H1 (cell line): ENCODE measurements at regions of chr7 and their contacts with region 1.

Region 1: GRCh38 chr7:121395961-121396757 is at the start of gene FAM3C:
- DNase-seq: peak; percentile 53 to 92
- H3K4me3 ChIP-seq: peak within 1 kb of the TSS; percentile 53 to 81 (median 76)
- H3K27ac ChIP-seq: peak within 1 kb of the TSS; percentile 84
- H3K4me1 ChIP-seq: no peaks in the 10 kb centered on the region
- H3K27me3 ChIP-seq: no peaks in the 10 kb centered on the region
- CTCF ChIP-seq: peak; percentile 77 to 78 (median 77)
- EP300 ChIP-seq: 0 out of 3 replicates have a peak, but pooled peaks of 1 of the 2 experiments have one; percentile 38
- POLR2A ChIP-seq: peak; percentile 75 to 88
- RAD21 ChIP-seq: peak; percentile 35 to 55
- total RNA-seq, gene FAM3C: 71.5 and 77.7 TPM in 2 replicates

Region 2: DNA sequence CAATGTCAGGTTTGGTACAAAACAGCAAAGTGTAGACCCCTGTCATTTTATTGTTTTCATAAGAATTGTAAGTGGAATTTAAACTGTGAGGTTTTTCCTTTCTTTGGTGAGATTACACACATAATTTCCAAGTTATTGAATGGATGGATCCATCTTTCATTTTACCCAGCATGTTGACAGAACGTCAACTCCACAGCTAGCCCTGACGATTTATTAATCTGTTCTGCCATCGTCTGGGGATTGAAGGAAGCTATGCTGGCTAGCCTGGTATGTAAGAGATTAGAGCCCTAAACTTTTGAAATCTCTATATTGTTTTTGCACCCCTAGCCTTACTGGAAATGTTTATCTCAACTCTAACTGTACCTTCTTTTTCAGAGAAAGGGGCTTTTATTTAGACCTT is 58.8 kb before region 1 on chr7:
- CTCF ChIA-PET with region 1: no interaction called
- POLR2A ChIA-PET with region 1: no interaction called
- DNase-seq: no peak
- H3K4me3 ChIP-seq: no peak overlapping the region
- H3K27ac ChIP-seq: no peak overlapping the region
- H3K4me1 ChIP-seq: no peaks in the 10 kb centered on the region
- H3K27me3 ChIP-seq: no peaks in the 10 kb centered on the region
- CTCF ChIP-seq: peak in 1 of 3 experiments; percentile 9; a peak in 1 of 4 replicates
- EP300 ChIP-seq: no peak
- POLR2A ChIP-seq: no peak
- RAD21 ChIP-seq: peak; percentile 39 to 46

Region 3: GRCh38 chr7:121372376-121373010 is 23.7 kb before region 1 on chr7:
- CTCF ChIA-PET with region 1: interaction called, 23 read pairs
- POLR2A ChIA-PET with region 1: interaction called, 3 read pairs
- DNase-seq: no peak
- H3K4me3 ChIP-seq: no peak overlapping the region
- H3K27ac ChIP-seq: no peak overlapping the region
- H3K4me1 ChIP-seq: peaks cover 0 to 2% (median 0%) of the 10 kb centered on the region in 4 experiments; a peak in 2 of 7 replicates
- H3K27me3 ChIP-seq: peaks cover 0 to 1% (median 0%) of the 10 kb centered on the region in 4 experiments; a peak in 1 of 7 replicates
- CTCF ChIP-seq: no peak
- EP300 ChIP-seq: no peak
- POLR2A ChIP-seq: no peak
- RAD21 ChIP-seq: no peak

Region 4: GRCh38 chr7:121385800-121386179 is 10.4 kb before region 1 on chr7:
- CTCF ChIA-PET with region 1: interaction called, 14 read pairs
- POLR2A ChIA-PET with region 1: interaction called, 30 read pairs
- DNase-seq: no peak
- H3K4me3 ChIP-seq: no peak overlapping the region
- H3K27ac ChIP-seq: no peak overlapping the region
- H3K4me1 ChIP-seq: no peaks in the 10 kb centered on the region; a peak in 1 of 7 replicates
- H3K27me3 ChIP-seq: no peaks in the 10 kb centered on the region
- CTCF ChIP-seq: no peak
- EP300 ChIP-seq: no peak
- POLR2A ChIP-seq: no peak
- RAD21 ChIP-seq: no peak

Region 5: GRCh38 chr7:121410829-121411596 is 14.9 kb after region 1 on chr7:
- CTCF ChIA-PET with region 1: interaction called, 15 read pairs
- POLR2A ChIA-PET with region 1: interaction called, 6 read pairs
- DNase-seq: no peak
- H3K4me3 ChIP-seq: no peak overlapping the region
- H3K27ac ChIP-seq: no peak overlapping the region; the same call in 1 of the 2 replicates
- H3K4me1 ChIP-seq: peaks cover 0 to 3% (median 0%) of the 10 kb centered on the region in 4 experiments; a peak in 2 of 7 replicates
- H3K27me3 ChIP-seq: no peaks in the 10 kb centered on the region
- CTCF ChIP-seq: no peak
- EP300 ChIP-seq: no peak
- POLR2A ChIP-seq: no peak
- RAD21 ChIP-seq: no peak

Region 6: DNA sequence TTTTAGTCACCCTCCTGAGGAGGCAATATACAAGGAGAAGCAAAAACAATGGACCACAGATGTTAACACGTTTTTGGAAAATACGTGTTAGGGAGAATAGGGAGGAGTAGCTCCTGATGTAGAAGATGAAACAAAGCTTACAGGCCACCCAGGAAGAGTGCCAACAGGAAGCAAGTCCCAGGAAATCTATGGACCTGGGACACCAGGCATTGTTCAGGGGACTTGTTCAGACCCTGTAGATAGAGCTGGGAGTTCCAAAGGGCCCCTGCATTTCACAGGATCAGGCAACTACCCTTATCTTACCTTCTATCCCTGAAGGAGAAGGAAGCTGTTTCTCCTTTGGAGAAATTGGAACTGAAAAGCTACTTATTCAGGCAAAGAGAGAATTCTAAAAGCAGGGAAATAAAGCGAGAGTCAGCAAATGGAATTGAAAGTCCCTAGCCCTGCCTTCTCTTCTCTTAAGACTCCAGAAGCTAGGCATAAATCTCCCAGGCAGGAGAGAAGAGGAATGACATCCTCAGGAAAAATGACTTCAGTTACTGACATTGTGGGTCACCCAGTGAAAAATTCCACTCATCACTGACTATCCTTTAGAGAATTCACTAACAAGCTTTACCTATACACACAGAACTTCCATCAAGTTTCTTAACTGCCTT is 77.6 kb after region 1 on chr7:
- CTCF ChIA-PET with region 1: interaction called, 10 read pairs
- POLR2A ChIA-PET with region 1: no interaction called
- DNase-seq: no peak
- H3K4me3 ChIP-seq: no peak overlapping the region
- H3K27ac ChIP-seq: no peak overlapping the region
- H3K4me1 ChIP-seq: no peaks in the 10 kb centered on the region
- H3K27me3 ChIP-seq: no peaks in the 10 kb centered on the region
- CTCF ChIP-seq: no peak
- EP300 ChIP-seq: no peak
- POLR2A ChIP-seq: no peak
- RAD21 ChIP-seq: no peak